ENCODE measurements at regions of chr5 and their contacts with region 1.

Region 1: GRCh38 chr5:43556857-43557542 is at the start of gene PAIP1:
- DNase-seq: peak; percentile 91 to 93
- H3K4me3 ChIP-seq: peak within 1 kb of the TSS; percentile 90
- H3K4me3 Mint-ChIP-seq: peak within 1 kb of the TSS; percentile 72
- H3K27ac Mint-ChIP-seq: peak within 1 kb of the TSS; percentile 94
- H3K4me1 ChIP-seq: no peaks in the 10 kb centered on the region
- H3K4me1 Mint-ChIP-seq: no peaks in the 10 kb centered on the region
- H3K27me3 ChIP-seq: no peaks in the 10 kb centered on the region
- H3K27me3 Mint-ChIP-seq: no peaks in the 10 kb centered on the region
- CTCF ChIP-seq: peak; percentile 56 to 70
- total RNA-seq, gene PAIP1: 115 and 121 TPM in 2 replicates

Region 2: DNA sequence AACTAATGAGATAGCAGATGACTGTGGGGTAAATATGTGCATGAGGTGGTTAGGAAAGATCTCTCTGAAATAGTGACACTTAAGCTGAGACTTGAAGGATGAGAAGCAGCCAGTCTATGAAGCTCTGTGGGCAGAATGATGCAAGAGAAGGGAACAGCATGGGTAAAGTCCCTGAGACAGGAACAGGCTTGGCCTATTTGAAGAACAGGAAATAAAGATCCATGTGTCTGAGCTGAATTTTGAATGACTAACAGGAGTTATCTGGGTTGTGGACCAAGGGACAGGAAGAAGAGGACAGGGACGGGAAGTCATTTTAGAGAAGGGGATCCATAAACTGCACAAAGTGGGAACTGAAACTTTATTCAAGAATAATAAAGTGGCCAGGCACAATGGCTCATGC is 218.1 kb before region 1 on chr5:
- CTCF ChIA-PET with region 1: no interaction called
- POLR2A ChIA-PET with region 1: no interaction called
- intact Hi-C with region 1: no loop called
- DNase-seq: no peak
- H3K4me3 ChIP-seq: no peak overlapping the region
- H3K4me3 Mint-ChIP-seq: no peak overlapping the region
- H3K27ac Mint-ChIP-seq: no peak overlapping the region
- H3K4me1 ChIP-seq: no peaks in the 10 kb centered on the region
- H3K4me1 Mint-ChIP-seq: no peaks in the 10 kb centered on the region
- H3K27me3 ChIP-seq: no peaks in the 10 kb centered on the region
- H3K27me3 Mint-ChIP-seq: no peaks in the 10 kb centered on the region
- CTCF ChIP-seq: no peak

Region 3: DNA sequence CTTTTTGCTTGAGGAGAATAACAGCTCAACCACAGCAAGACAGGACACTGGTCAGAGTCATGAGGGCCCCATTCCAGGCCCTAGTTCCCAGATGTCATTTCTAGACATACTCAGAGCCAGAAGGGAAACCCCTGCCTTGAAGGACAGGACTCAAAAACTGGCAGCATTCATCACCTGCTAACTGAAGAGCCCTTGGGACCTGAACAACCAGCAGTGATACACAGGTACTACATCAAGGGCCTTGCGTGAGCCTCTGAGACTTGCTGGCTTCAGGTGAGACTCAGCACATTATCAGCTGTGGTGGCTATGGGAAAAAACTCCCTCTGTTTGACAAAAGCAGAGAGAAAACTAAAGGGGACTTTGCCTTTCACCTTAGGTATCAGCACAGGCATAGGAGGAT is 95.9 kb before region 1 on chr5:
- CTCF ChIA-PET with region 1: no interaction called
- POLR2A ChIA-PET with region 1: no interaction called
- intact Hi-C with region 1: no loop called
- DNase-seq: no peak
- H3K4me3 ChIP-seq: no peak overlapping the region
- H3K4me3 Mint-ChIP-seq: no peak overlapping the region
- H3K27ac Mint-ChIP-seq: no peak overlapping the region
- H3K4me1 ChIP-seq: no peaks in the 10 kb centered on the region
- H3K4me1 Mint-ChIP-seq: peaks cover 6% of the 10 kb centered on the region
- H3K27me3 ChIP-seq: no peaks in the 10 kb centered on the region
- H3K27me3 Mint-ChIP-seq: no peaks in the 10 kb centered on the region
- CTCF ChIP-seq: no peak

Region 4: DNA sequence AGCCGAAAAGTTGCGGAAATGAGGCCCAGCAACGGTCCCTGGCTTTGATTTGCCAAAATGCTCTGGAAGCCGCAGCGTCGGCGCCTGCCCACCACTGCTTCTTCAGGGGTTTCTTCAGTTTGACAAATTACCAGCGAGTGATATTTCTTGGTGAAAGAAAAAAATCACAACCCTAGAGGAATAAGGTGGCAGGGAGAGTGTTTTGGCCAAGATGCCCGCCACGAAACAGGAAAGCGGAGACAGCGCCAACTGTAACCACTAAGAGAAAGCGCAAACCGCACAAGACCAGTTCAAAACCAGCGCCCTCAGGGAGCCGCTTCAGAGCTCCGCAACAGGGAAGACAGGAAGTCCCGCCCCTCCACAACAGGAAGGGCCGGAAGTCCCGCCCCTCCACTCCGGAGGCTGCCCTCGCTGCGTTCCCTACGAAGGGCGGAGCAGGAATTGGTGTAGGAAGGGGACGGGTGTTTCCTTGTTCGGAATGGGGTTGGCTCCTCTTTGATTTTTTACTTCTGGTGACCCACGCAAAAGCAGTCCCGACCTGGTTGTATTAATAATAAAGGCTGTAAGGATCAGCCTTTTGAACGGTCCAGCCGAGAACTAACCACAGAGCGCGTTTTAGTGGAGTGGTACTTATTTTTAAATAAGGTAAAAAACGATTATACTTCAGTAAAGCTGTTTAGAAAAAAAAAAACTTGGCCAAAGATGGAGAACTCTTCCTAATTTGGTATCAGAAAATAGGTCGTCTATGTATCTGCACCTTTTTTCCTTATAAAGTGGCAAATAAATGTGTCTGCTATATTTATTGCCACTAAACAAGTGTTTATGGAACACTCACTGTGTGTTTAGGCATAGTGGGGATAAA is 42.0 kb before region 1 on chr5 and contains the start of gene C5orf34:
- CTCF ChIA-PET with region 1: no interaction called
- POLR2A ChIA-PET with region 1: interaction called, 7 read pairs
- intact Hi-C with region 1: loop called (anchors 1 kb)
- DNase-seq: peak; percentile 96 to 97
- H3K4me3 ChIP-seq: peak within 1 kb of the TSS; percentile 49
- H3K4me3 Mint-ChIP-seq: peak within 1 kb of the TSS; percentile 75
- H3K27ac Mint-ChIP-seq: peak within 1 kb of the TSS; percentile 23
- H3K4me1 ChIP-seq: peaks cover 13% of the 10 kb centered on the region; the same call in 1 of the 2 replicates
- H3K4me1 Mint-ChIP-seq: peaks cover 22% of the 10 kb centered on the region
- H3K27me3 ChIP-seq: no peaks in the 10 kb centered on the region
- H3K27me3 Mint-ChIP-seq: no peaks in the 10 kb centered on the region
- CTCF ChIP-seq: no peak
- total RNA-seq, gene C5orf34: 7.0 and 7.1 TPM in 2 replicates

Region 5: GRCh38 chr5:43602461-43603343 is 45.7 kb after region 1 on chr5 and contains the start of gene NNT:
- CTCF ChIA-PET with region 1: no interaction called
- POLR2A ChIA-PET with region 1: interaction called, 3 read pairs
- intact Hi-C with region 1: loop called (anchors 1 kb)
- DNase-seq: peak; percentile 81 to 86
- H3K4me3 ChIP-seq: peak within 1 kb of the TSS; percentile 60
- H3K4me3 Mint-ChIP-seq: peak within 1 kb of the TSS; percentile 88
- H3K27ac Mint-ChIP-seq: peak within 1 kb of the TSS; percentile 84
- H3K4me1 ChIP-seq: no peaks in the 10 kb centered on the region; the same call in 1 of the 2 replicates
- H3K4me1 Mint-ChIP-seq: peaks cover 7% of the 10 kb centered on the region
- H3K27me3 ChIP-seq: no peaks in the 10 kb centered on the region
- H3K27me3 Mint-ChIP-seq: no peaks in the 10 kb centered on the region
- CTCF ChIP-seq: no peak
- total RNA-seq, gene NNT: 42.5 and 44.8 TPM in 2 replicates